Psoas muscle (tissue), 8 donors: ENCODE measurements at regions of chr1 and their contacts with region 1.

Region 1: GRCh38 chr1:66446261-66447001 is 87.5 kb upstream of the SGIP1 start:
- DNase-seq: no peak
- ATAC-seq: peak; percentile 75 to 96 (median 86)
- H3K4me3 ChIP-seq: no peak overlapping the region
- H3K27ac ChIP-seq: no peak overlapping the region
- H3K4me1 ChIP-seq: peaks cover 7% of the 10 kb centered on the region
- H3K27me3 ChIP-seq: no peaks in the 10 kb centered on the region
- CTCF ChIP-seq: peak; percentile 94

Region 2: DNA sequence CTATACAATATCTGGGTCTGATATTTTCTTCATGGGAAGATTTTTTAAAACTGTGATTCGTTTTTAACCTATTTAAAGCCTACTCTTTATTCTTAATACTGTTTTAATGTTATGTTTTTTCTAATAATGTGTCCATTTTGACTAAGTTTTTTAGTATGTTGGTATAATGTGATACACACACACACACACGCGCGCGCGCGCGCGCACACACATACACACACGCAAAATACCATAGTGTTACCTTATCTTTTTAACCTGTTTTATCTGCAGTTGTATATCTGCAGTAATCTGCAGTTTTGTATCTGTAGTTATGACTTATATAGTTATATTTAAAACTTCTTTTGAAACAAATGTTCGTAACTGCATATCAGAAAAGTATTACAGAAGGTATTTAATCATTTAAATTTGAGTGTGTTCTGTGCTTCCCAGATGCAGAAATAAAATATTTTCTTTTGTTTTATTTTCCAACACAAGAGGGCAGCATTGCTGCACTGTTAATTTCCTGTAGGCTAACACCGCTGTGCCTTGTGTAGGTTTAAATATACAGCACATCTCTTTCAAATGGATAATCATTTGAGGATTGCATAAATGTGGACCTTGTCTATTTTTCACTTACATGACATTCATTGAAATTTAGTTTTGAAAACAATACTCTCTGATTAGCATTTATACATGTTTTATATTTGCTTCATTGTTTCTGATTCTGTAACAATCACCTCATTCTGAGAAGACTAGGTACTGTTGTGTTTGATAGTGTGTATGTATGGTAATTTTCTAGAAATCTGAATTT is 487.7 kb before region 1 on chr1:
- intact Hi-C with region 1: loop called (anchors 2 to 5 kb)
- DNase-seq: peak in 1 of 2 donors; percentile 34
- ATAC-seq: peak in 3 of 4 donors; percentile 52 to 70 (median 55)
- H3K4me3 ChIP-seq: no peak overlapping the region
- H3K27ac ChIP-seq: no peak overlapping the region
- H3K4me1 ChIP-seq: no peaks in the 10 kb centered on the region
- H3K27me3 ChIP-seq: no peaks in the 10 kb centered on the region
- CTCF ChIP-seq: peak; percentile 84

Region 3: GRCh38 chr1:66253330-66253921 is 193.0 kb before region 1 on chr1:
- intact Hi-C with region 1: loop called (anchors 1 to 2 kb)
- DNase-seq: no peak
- ATAC-seq: peak; percentile 90 to 95 (median 94)
- H3K4me3 ChIP-seq: no peak overlapping the region
- H3K27ac ChIP-seq: no peak overlapping the region
- H3K4me1 ChIP-seq: peaks cover 19% of the 10 kb centered on the region
- H3K27me3 ChIP-seq: no peaks in the 10 kb centered on the region
- CTCF ChIP-seq: peak; percentile 87

Region 4: DNA sequence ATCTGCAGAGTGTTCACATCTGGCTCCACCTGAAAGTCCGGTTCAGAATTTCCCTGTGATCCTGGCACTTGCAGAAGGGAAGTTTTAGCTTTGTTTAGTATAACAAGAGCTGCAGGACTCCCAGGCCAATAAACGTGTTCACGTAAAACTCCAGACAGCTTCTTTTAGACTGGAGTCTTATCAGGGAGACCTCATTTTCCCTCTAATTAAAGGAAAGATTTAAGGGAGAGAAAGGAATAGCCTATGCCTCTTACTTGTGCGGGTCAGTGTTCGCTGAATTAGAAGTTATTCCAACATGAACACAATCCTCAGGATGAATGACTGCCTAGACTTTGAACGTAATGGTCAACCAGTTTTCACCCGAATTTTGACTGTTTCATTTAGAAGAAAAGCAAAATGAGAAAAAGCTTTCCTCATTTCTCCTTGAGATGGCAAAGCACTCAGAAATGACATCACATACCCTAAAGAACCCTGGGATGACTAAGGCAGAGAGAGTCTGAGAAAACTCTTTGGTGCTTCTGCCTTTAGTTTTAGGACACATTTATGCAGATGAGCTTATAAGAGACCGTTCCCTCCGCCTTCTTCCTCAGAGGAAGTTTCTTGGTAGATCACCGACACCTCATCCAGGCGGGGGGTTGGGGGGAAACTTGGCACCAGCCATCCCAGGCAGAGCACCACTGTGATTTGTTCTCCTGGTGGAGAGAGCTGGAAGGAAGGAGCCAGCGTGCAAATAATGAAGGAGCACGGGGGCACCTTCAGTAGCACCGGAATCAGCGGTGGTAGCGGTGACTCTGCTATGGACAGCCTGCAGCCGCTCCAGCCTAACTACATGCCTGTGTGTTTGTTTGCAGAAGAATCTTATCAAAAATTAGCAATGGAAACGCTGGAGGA is 114.5 kb before region 1 on chr1:
- intact Hi-C with region 1: loop called in 1 of 2 experiments (anchors 5 kb)
- DNase-seq: peak; percentile 78 to 81
- ATAC-seq: peak; percentile 73 to 76 (median 74)
- H3K4me3 ChIP-seq: peak overlapping the region; percentile 89
- H3K27ac ChIP-seq: peak overlapping the region; percentile 95
- H3K4me1 ChIP-seq: peaks cover 40% of the 10 kb centered on the region
- H3K27me3 ChIP-seq: no peaks in the 10 kb centered on the region
- CTCF ChIP-seq: peak; percentile 44

Region 5: DNA sequence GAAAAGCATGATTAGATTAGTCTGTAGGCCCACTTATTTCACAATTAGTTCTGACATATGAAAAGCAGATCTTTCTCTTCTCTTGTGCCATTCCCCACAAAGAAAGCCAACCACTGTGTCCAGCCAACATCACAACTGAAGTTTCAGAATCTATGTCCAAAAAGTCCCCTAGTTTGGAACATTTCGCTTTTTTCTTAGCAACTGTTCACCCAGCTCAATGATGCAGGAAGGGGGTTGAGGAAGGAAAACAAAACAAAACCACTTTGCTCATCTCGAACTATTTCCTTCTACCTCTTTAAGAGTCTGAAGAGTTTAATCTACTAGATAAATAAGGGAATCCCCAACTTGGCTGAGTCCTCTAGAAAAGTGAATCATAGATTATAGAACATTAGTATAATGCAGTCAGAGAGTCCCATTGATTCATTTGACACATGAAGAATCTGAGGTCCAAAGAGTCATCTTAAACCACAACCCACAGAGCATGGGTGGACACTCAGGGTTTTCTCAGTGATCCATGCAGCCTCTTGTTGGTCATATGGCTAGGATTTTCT is 71.8 kb before region 1 on chr1:
- intact Hi-C with region 1: loop called in 1 of 2 experiments (anchors 10 kb)
- DNase-seq: no peak
- ATAC-seq: peak; percentile 25 to 45 (median 32)
- H3K4me3 ChIP-seq: no peak overlapping the region
- H3K27ac ChIP-seq: no peak overlapping the region
- H3K4me1 ChIP-seq: peaks cover 24% of the 10 kb centered on the region
- H3K27me3 ChIP-seq: no peaks in the 10 kb centered on the region
- CTCF ChIP-seq: no peak

Region 6: DNA sequence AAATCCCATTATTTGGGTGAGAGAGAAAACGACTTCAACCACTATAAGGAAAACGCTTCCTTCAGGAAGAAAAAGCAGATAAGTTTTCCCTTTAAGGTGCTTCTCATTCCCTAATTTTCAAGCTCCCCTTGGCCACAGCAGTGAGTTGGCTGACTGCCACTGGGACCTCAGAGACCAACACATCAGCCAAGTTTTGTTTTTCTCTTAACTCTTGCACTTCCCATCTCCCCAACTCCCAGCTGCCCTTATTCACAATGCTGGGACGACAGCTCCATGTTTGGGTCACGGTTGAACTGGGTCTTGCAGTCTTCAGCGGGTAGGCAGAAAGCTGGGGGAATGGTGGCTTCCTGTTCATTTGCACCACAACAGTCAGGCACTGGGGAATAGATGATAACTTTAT is 106.4 kb after region 1 on chr1:
- intact Hi-C with region 1: no loop called
- DNase-seq: peak in 1 of 2 donors; percentile 50
- ATAC-seq: no peak
- H3K4me3 ChIP-seq: no peak overlapping the region
- H3K27ac ChIP-seq: no peak overlapping the region
- H3K4me1 ChIP-seq: no peaks in the 10 kb centered on the region
- H3K27me3 ChIP-seq: no peaks in the 10 kb centered on the region
- CTCF ChIP-seq: no peak